Heart right ventricle (tissue), 16 donors: ENCODE measurements at regions of chr20 and their contacts with region 1.

Region 1: GRCh38 chr20:4607287-4607713 is 114.4 kb upstream of the PRND start:
- DNase-seq: peak in 1 of 2 donors; percentile 64
- ATAC-seq: peak; percentile 52 to 83 (median 79)
- H3K4me3 ChIP-seq: no peak overlapping the region
- H3K27ac ChIP-seq: no peak overlapping the region
- H3K4me1 ChIP-seq: peaks cover 0 to 18% (median 0%) of the 10 kb centered on the region in 9 donors
- H3K27me3 ChIP-seq: peaks cover 0 to 16% (median 0%) of the 10 kb centered on the region in 7 donors
- CTCF ChIP-seq: peak; percentile 89 to 97 (median 95)

Region 2: GRCh38 chr20:4524307-4524706 is 83.0 kb before region 1 on chr20:
- intact Hi-C with region 1: no loop called
- DNase-seq: no peak
- ATAC-seq: no peak
- H3K4me3 ChIP-seq: no peak overlapping the region
- H3K27ac ChIP-seq: no peak overlapping the region
- H3K4me1 ChIP-seq: no peaks in the 10 kb centered on the region
- H3K27me3 ChIP-seq: peaks cover 0 to 9% (median 0%) of the 10 kb centered on the region in 7 donors
- CTCF ChIP-seq: no peak

Region 3: DNA sequence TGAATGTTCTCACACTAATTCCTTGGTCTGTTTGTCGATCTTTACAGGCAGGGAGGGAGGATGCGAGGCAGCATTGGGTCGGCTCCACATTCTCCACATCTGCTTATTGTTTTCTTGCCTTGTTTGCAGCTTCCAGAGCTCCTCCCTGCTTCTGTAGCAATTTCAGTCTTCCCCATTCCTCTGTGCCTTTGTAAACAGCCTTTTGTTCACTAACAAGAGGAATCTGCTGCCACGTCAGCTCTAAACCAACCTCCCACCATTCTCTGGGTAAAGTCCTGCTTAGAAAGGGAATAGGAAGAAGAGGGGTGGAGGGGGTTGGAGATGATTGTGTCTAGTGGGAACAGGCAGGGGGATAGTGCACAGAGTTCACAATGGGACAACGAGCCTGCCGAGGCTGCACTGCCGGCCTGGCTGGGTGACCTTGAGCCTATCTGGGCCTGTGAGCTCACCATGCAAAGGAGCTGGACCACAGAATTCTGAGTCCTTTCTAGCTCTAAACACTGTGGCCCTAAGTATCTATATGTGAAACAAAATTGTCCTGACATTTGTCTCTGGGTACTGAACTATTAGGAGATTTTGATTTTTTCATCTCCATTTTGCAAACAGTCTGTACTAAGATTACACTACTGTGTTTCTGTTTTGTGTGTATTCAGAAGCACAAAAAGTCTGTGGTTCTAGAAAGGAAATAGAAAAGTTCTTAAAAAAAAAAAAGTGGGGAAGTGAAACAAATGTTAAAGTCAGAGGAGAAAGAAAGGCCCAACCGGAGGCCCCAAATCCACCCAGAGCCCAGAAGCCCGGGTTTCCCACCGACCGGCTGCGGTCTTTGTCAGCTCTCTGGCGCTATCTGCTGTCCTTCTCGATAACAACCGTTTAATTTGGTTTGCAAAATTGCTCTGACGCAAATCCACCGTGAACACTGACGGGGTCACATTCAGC is 113.0 kb after region 1 on chr20:
- intact Hi-C with region 1: loop called (anchors 1 to 5 kb)
- DNase-seq: peak; percentile 67 to 83
- ATAC-seq: peak; percentile 81 to 93 (median 90)
- H3K4me3 ChIP-seq: peak overlapping the region in 1 of 10 donors; percentile 4
- H3K27ac ChIP-seq: peak overlapping the region in 9 of 10 donors; percentile 34 to 90 (median 67)
- H3K4me1 ChIP-seq: peaks cover 0 to 18% (median 13%) of the 10 kb centered on the region in 9 donors
- H3K27me3 ChIP-seq: no peaks in the 10 kb centered on the region
- CTCF ChIP-seq: peak; percentile 38 to 86 (median 77)

Region 4: GRCh38 chr20:4949833-4950178 is 342.5 kb after region 1 on chr20:
- intact Hi-C with region 1: loop called in 6 of 10 experiments (anchors 5 to 10 kb)
- DNase-seq: no peak
- ATAC-seq: peak in 7 of 8 donors; percentile 43 to 65 (median 58)
- H3K4me3 ChIP-seq: no peak overlapping the region
- H3K27ac ChIP-seq: no peak overlapping the region
- H3K4me1 ChIP-seq: peaks cover 0 to 43% (median 8%) of the 10 kb centered on the region in 9 donors
- H3K27me3 ChIP-seq: no peaks in the 10 kb centered on the region
- CTCF ChIP-seq: peak in 8 of 9 donors; percentile 28 to 60 (median 52)

Region 5: DNA sequence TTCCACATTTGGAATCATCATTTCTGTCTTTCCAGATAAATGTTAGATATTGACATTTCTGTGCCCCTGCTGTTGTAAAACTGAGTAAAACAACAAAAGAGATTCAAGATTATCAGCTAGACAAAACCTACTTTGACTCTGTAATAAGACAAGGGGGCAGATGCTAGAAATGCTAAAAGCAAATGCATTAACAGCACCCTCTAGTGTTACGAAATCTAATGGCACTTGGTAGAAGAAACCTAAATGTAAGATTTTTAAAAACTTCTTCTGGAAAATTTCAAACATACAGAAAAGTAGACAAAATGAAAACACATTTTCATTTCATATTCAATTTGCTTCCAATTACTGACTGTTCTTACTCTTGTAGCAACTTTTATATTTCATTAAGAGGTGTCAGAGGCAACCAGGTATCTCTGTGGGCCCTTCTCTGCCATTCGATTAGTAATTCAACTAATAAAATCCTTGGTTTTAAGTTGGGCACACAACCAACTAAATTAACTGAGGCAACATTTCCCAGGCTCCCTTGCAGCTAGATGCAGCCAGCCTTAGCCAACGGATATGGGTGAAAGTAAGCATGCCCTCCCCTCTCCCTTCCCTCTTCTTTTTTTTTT is 349.0 kb after region 1 on chr20:
- intact Hi-C with region 1: loop called in 6 of 10 experiments (anchors 5 to 10 kb)
- DNase-seq: no peak
- ATAC-seq: peak in 2 of 8 donors; percentile 48 to 56
- H3K4me3 ChIP-seq: no peak overlapping the region
- H3K27ac ChIP-seq: no peak overlapping the region
- H3K4me1 ChIP-seq: peaks cover 0 to 22% (median 5%) of the 10 kb centered on the region in 9 donors
- H3K27me3 ChIP-seq: no peaks in the 10 kb centered on the region
- CTCF ChIP-seq: peak; percentile 78 to 92 (median 83)

Region 6: DNA sequence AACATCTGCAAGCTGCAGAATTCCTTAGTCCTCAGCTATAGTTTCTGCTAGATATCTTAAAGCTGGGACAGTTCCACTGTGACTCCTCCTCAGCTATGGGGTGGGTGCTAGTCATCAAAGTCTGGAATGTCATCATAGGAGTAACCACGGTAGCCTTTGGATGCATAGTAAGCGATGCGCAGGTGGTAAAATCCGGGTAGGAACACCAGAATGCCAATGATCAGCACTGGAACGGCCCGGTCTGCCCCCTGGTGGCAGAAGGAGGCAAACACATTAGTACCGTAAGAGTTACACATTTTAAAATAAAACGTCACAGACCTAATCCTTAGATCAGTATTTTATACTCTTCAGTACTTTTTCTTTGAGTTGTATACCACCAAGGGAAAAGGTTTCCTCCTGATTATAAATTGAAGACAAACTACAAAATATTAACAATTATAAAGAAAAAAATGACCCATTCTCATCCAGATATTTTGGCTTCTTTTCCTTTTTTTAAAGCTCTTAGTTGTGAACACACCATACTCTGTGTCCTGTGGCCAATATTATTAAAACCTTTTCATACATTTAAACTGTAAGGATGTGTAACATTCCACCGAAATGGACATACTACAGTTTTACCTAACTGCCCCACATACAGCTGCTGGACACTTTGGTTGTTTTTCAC is 493.5 kb after region 1 on chr20:
- intact Hi-C with region 1: loop called in 7 of 10 experiments (anchors 5 to 10 kb)
- DNase-seq: peak; percentile 72 to 73
- ATAC-seq: peak; percentile 63 to 84 (median 76)
- H3K4me3 ChIP-seq: no peak overlapping the region
- H3K27ac ChIP-seq: peak overlapping the region in 1 of 10 donors; percentile 32
- H3K4me1 ChIP-seq: peaks cover 0 to 6% (median 0%) of the 10 kb centered on the region in 9 donors
- H3K27me3 ChIP-seq: no peaks in the 10 kb centered on the region
- CTCF ChIP-seq: peak; percentile 85 to 94 (median 89)